ENCODE measurements at regions of chr9 and their contacts with region 1.

Region 1: GRCh38 chr9:125272697-125273096 is 11.1 kb downstream of the GAPVD1 start:
- DNase-seq: no peak
- ATAC-seq: no peak
- H3K4me3 ChIP-seq: no peak overlapping the region
- H3K4me3 Mint-ChIP-seq: no peak overlapping the region
- H3K27ac ChIP-seq: no peak overlapping the region
- H3K27ac Mint-ChIP-seq: no peak overlapping the region
- H3K4me1 ChIP-seq: peaks cover 0 to 5% of the 10 kb centered on the region in 2 donors
- H3K4me1 Mint-ChIP-seq: peaks cover 22% of the 10 kb centered on the region
- H3K27me3 ChIP-seq: no peaks in the 10 kb centered on the region
- H3K27me3 Mint-ChIP-seq: no peaks in the 10 kb centered on the region
- CTCF ChIP-seq: no peak

Region 2: GRCh38 chr9:125166762-125167161 is 105.9 kb before region 1 on chr9:
- CTCF ChIA-PET with region 1: no interaction called
- POLR2A ChIA-PET with region 1: interaction called, 13 read pairs
- intact Hi-C with region 1: no loop called
- DNase-seq: no peak
- ATAC-seq: no peak
- H3K4me3 ChIP-seq: no peak overlapping the region
- H3K4me3 Mint-ChIP-seq: no peak overlapping the region
- H3K27ac ChIP-seq: no peak overlapping the region
- H3K27ac Mint-ChIP-seq: no peak overlapping the region
- H3K4me1 ChIP-seq: no peaks in the 10 kb centered on the region
- H3K4me1 Mint-ChIP-seq: peaks cover 7% of the 10 kb centered on the region
- H3K27me3 ChIP-seq: no peaks in the 10 kb centered on the region
- H3K27me3 Mint-ChIP-seq: no peaks in the 10 kb centered on the region
- CTCF ChIP-seq: no peak

Region 3: DNA sequence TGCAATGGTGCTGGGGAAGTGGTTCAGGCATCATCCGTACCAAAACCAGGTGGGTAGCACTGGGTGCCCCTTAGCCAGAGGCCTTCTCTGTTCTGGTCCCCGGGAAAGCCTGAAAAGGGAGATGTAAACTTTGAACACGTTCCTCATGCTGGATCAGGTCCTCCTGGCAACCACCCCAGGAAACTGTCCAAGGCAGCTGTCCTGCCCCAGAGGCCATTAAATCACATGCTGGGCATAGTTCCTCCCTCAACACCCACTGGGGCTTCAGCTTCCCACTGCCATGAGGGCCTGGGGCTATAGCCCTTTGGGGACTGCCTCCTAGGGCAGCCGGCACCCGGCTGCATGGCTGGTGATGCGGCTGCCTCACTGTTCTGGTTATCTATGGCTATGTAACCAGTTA is 825.0 kb after region 1 on chr9:
- CTCF ChIA-PET with region 1: no interaction called
- POLR2A ChIA-PET with region 1: no interaction called
- intact Hi-C with region 1: no loop called
- DNase-seq: no peak
- ATAC-seq: no peak
- H3K4me3 ChIP-seq: no peak overlapping the region
- H3K4me3 Mint-ChIP-seq: no peak overlapping the region
- H3K27ac ChIP-seq: no peak overlapping the region
- H3K27ac Mint-ChIP-seq: no peak overlapping the region
- H3K4me1 ChIP-seq: no peaks in the 10 kb centered on the region
- H3K4me1 Mint-ChIP-seq: no peaks in the 10 kb centered on the region
- H3K27me3 ChIP-seq: no peaks in the 10 kb centered on the region
- H3K27me3 Mint-ChIP-seq: peaks cover 13% of the 10 kb centered on the region
- CTCF ChIP-seq: no peak

Measured in B cell (primary cell).